ENCODE measurements at regions of chr12 and their contacts with region 1.

Region 1: DNA sequence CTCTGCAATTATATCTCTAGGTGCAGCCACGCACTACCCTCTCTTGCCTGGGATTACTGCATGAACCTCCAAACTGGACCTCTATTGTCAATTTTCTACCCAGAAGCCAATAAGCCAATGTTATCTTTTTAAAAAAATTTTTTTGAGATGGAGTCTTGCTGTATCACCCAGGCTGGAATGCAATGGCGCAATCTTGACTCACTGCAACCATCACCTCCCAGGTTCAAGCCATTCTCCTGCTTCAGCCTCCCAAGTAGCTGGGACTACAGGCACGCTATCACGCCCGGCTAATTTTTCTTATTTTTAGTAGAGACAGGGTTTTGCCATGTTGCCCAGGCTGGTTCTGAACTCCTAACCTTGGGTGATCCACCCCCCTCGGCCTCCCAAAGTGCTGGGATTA is 11.2 kb upstream of the PXN start:
- DNase-seq: peak; percentile 51
- H3K4me3 ChIP-seq: no peak overlapping the region
- H3K27ac ChIP-seq: no peak overlapping the region
- H3K4me1 ChIP-seq: no peaks in the 10 kb centered on the region
- H3K27me3 ChIP-seq: no peaks in the 10 kb centered on the region

Region 2: DNA sequence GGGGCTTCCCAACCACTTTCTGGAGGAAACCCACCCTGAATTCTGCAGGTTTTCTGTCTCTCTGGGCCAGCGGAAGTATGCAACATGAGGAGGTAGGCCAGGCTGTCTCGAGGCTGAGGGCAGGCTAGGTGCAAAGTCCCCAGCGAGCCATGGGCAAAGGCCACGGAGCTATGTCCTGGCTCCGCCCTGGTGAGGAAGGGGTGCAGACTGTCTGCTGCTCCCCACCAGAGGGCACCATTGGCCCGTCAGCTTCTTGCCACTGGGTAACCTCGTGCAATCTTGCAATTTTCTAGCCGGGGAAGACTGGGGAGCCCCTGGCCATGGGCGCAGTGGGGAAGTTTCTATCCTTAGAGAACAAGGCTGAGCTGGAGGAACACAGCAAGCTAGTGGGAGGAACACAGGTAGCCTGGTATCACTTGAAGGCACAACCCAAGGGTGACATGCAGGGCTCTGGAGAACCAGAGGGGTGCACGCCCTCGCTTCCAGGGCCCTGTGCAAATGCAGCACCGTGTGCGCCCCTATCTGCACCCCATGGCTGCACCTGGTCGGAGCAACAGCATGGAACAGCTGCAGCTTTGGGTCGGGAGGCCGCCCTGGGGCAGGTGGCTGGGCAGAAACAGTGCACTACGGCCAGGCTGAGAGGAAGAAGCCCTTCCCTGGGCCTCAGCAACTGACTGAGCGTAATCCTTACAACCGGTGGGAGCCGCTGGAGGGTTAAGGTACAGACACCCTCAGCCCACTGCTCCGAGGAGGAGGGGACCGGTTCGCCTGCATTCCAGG is 48.3 kb before region 1 on chr12:
- in situ Hi-C with region 1: loop called (anchors 10 kb)
- DNase-seq: peak; percentile 86
- H3K4me3 ChIP-seq: 0 out of 2 replicates have a peak overlapping the region, but pooled peaks have one; percentile 16
- H3K27ac ChIP-seq: peak overlapping the region; percentile 98
- H3K4me1 ChIP-seq: peaks cover 65% of the 10 kb centered on the region
- H3K27me3 ChIP-seq: no peaks in the 10 kb centered on the region

Region 3: DNA sequence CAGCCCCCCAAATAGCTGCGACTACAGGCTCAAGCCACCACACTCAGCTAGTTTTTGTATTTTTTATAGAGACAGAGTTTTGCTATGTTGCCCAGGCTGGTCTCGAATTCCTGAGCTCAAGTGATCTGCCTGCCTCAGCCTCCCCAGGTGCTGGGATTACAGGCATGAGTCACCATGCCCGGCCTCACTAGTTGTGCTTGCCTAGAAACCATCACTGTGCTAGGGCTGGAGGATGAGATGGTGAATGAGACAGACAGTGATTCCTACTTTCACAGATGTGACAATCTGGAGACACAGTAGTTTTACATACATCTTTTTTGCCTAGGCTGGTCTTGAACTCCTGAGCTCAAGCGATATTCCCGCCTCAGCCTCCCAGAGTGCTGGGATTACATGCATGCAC is 99.7 kb after region 1 on chr12:
- in situ Hi-C with region 1: no loop called
- DNase-seq: no peak
- H3K4me3 ChIP-seq: no peak overlapping the region
- H3K27ac ChIP-seq: no peak overlapping the region
- H3K4me1 ChIP-seq: no peaks in the 10 kb centered on the region
- H3K27me3 ChIP-seq: peaks cover 61% of the 10 kb centered on the region